GM23248 (cell line): ENCODE measurements at regions of chr7 and their contacts with region 1.

Region 1: DNA sequence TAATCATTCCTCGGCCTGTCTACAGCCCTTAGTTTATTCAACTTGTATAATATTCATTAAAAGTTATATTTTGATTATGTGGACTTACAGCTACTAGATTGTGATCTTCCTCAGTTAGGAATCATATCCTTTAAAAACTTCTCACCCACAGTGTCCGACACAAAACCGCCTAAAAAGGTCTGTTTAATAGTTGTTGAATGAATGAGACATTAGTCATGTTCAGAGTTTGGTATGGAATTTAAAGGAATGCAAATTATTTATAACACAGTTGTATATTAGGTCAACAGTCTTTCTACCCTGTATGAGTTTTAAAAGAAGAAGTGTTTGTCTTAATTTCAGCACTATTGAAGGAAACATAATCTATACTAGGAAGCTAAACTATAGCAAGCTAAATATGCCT is 390.0 kb downstream of the ARL4A start:
- DNase-seq: peak; percentile 51
- H3K4me3 ChIP-seq: peak overlapping the region; percentile 27
- H3K27ac ChIP-seq: no peak overlapping the region
- H3K4me1 ChIP-seq: peaks cover 19% of the 10 kb centered on the region
- H3K27me3 ChIP-seq: no peaks in the 10 kb centered on the region

Region 2: GRCh38 chr7:13017333-13017853 is 60.1 kb before region 1 on chr7:
- in situ Hi-C with region 1: loop called (anchors 10 kb)
- DNase-seq: peak; percentile 54
- H3K4me3 ChIP-seq: no peak overlapping the region
- H3K27ac ChIP-seq: no peak overlapping the region
- H3K4me1 ChIP-seq: peaks cover 14% of the 10 kb centered on the region
- H3K27me3 ChIP-seq: no peaks in the 10 kb centered on the region

Region 3: DNA sequence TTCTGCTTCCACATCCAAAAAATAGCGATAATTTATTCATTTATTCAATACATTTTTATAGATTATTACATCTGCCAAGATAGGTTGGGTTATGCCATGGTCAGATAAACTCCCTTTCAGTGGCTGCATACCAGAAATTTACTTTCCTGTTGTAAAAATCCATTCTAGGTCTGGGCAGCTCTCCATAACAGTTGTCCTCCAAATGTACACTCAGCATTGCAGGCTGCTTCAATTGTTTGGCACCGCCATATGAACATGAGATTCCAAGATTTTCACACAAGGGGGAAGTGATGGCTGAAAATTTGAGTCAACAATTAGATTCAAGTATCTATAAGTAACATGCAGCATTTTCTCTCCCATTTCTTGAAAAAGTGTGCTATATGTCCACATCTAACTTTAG is 343.3 kb after region 1 on chr7:
- in situ Hi-C with region 1: no loop called
- DNase-seq: no peak
- H3K4me3 ChIP-seq: no peak overlapping the region
- H3K27ac ChIP-seq: no peak overlapping the region
- H3K4me1 ChIP-seq: no peaks in the 10 kb centered on the region
- H3K27me3 ChIP-seq: no peaks in the 10 kb centered on the region